ENCODE measurements at regions of chr2 and their contacts with region 1.

Region 1: GRCh38 chr2:30711646-30712085 is 95.6 kb downstream of the CAPN13 start:
- DNase-seq: peak; percentile 76
- H3K4me3 ChIP-seq: no peak overlapping the region
- H3K27ac ChIP-seq: no peak overlapping the region
- H3K4me1 ChIP-seq: no peaks in the 10 kb centered on the region
- H3K27me3 ChIP-seq: no peaks in the 10 kb centered on the region
- CTCF ChIP-seq: peak; percentile 84 to 99 (median 96)
- POLR2A ChIP-seq: no peak

Region 2: DNA sequence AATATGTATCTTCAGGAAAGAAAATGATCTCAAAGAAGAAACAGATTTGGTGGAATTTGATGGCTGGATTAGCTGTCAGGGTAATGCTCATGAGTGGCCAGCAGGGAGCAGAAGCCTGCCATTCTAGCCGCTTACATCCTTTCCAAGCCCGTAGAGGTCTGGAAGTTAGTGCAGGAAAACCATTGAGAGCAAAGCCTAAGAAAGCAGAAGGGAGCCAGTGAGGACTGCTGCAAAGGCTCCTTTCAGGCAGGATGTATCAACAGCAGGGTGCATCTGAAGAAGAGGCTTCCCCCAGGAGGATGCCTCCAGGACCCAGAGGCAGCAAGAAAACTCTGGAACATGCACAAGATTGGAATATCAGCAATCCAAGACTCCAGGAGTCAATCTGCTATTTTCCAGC is 503.2 kb before region 1 on chr2:
- intact Hi-C with region 1: loop called (anchors 2 kb)
- DNase-seq: peak; percentile 62
- H3K4me3 ChIP-seq: no peak overlapping the region
- H3K27ac ChIP-seq: no peak overlapping the region
- H3K4me1 ChIP-seq: no peaks in the 10 kb centered on the region
- H3K27me3 ChIP-seq: no peaks in the 10 kb centered on the region
- CTCF ChIP-seq: peak; percentile 76 to 92 (median 90)
- POLR2A ChIP-seq: no peak

Region 3: GRCh38 chr2:30447149-30448045 is 264.3 kb before region 1 on chr2 and contains the start of gene LCLAT1:
- intact Hi-C with region 1: loop called (anchors 10 kb)
- DNase-seq: peak; percentile 73
- H3K4me3 ChIP-seq: peak within 1 kb of the TSS; percentile 87
- H3K27ac ChIP-seq: peak within 1 kb of the TSS; percentile 67 to 69
- H3K4me1 ChIP-seq: no peaks in the 10 kb centered on the region
- H3K27me3 ChIP-seq: no peaks in the 10 kb centered on the region
- CTCF ChIP-seq: no peak
- POLR2A ChIP-seq: no peak
- total RNA-seq, gene LCLAT1: 18.8 to 28.2 TPM

Region 4: GRCh38 chr2:31333527-31334183 is 622.0 kb after region 1 on chr2:
- intact Hi-C with region 1: loop called (anchors 5 kb)
- DNase-seq: peak; percentile 89
- H3K4me3 ChIP-seq: no peak overlapping the region
- H3K27ac ChIP-seq: peak overlapping the region in 1 of 2 donors; percentile 7
- H3K4me1 ChIP-seq: no peaks in the 10 kb centered on the region
- H3K27me3 ChIP-seq: peaks cover 2% of the 10 kb centered on the region
- CTCF ChIP-seq: peak; percentile 64 to 95 (median 89)
- POLR2A ChIP-seq: no peak